ENCODE measurements at regions of chr19 and their contacts with region 1.

Region 1: GRCh38 chr19:55503502-55504251 is 15.4 kb downstream of the SSC5D start:
- DNase-seq: peak; percentile 92
- H3K4me3 Mint-ChIP-seq: peak overlapping the region; percentile 39
- H3K27ac Mint-ChIP-seq: no peak overlapping the region
- H3K4me1 Mint-ChIP-seq: no peaks in the 10 kb centered on the region
- H3K27me3 Mint-ChIP-seq: peaks cover 58% of the 10 kb centered on the region
- CTCF ChIP-seq: peak; percentile 98

Region 2: DNA sequence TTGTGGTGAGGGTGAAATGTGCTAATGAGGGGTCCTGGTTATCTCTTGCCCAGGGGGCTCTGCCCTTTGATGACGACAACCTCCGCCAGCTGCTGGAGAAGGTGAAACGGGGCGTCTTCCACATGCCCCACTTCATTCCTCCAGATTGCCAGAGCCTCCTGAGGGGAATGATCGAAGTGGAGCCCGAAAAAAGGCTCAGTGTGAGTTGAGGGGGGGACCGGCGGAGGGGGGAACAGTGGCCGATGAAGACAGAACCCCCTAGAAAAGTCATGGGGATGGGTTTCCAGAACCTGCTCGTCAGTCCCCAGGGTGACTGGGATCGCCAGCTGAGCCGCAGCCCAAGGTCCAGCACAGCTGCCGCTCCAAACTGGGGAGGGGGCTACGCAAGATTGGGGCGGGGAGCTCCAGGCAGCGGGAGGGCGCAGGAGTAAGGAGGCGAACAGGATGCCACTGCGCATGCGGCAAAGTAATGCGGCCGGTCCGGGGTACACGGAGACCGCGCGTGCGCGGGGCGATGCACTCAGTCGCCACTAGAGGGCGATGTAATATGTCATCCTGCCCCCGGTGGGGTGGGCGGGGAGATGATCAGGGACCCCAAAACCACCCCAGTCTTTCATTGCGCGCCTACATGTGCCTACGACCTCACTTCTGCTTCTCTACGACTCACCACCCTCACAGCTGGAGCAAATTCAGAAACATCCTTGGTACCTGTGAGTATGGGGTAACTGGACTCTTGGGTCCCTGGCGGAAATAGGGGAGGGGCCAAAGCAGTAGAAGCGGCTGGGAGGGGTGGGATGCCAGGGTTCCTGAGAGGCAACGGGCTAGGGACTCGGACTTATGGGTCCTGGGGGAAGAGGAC is 202.0 kb before region 1 on chr19:
- CTCF ChIA-PET with region 1: no interaction called
- intact Hi-C with region 1: loop called (anchors 10 kb)
- DNase-seq: peak; percentile 96
- H3K4me3 Mint-ChIP-seq: peak overlapping the region; percentile 75
- H3K27ac Mint-ChIP-seq: peak overlapping the region; percentile 42
- H3K4me1 Mint-ChIP-seq: peaks cover 10% of the 10 kb centered on the region
- H3K27me3 Mint-ChIP-seq: peaks cover 33% of the 10 kb centered on the region
- CTCF ChIP-seq: peak; percentile 99

Region 3: DNA sequence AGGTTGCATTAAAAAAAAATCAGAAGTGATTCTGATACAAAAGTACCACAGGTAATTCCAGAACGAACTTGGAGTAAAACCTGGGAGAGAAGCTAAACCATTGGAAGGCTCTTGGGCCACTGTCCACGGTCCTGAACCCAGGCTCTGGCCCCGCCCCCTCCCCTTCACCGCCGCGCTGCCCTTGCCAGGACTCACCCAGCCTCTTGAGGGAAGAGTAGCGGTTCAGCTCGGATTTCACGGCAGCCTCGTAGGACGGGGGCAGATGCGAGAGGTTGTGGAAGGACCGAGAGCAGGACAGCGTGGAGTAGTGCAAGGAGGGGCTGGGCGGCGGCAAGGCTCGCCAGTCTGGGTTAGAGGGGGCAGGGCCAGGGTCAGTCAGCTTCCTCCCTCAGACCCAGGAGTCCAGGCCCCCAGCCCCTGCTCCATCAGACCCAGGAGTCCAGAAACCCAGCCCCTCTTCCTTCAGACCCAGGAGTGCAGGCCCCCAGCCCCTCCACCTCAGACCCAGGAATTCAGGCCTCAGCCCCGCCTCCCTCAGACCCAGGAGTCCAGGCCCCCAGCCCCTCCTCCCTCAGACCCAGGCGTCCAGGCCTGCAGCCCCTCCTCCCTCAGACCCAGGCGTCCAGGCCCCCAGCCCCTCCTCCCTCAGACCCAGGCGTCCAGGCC is 66.1 kb before region 1 on chr19:
- CTCF ChIA-PET with region 1: no interaction called
- intact Hi-C with region 1: no loop called
- DNase-seq: peak; percentile 81
- H3K4me3 Mint-ChIP-seq: no peak overlapping the region
- H3K27ac Mint-ChIP-seq: no peak overlapping the region
- H3K4me1 Mint-ChIP-seq: peaks cover 13% of the 10 kb centered on the region
- H3K27me3 Mint-ChIP-seq: no peaks in the 10 kb centered on the region
- CTCF ChIP-seq: no peak

Region 4: GRCh38 chr19:55467236-55468053 is 36.2 kb before region 1 on chr19:
- CTCF ChIA-PET with region 1: interaction called, 25 read pairs
- intact Hi-C with region 1: loop called (anchors 1 kb)
- DNase-seq: peak; percentile 90
- H3K4me3 Mint-ChIP-seq: no peak overlapping the region
- H3K27ac Mint-ChIP-seq: no peak overlapping the region
- H3K4me1 Mint-ChIP-seq: peaks cover 33% of the 10 kb centered on the region
- H3K27me3 Mint-ChIP-seq: peaks cover 54% of the 10 kb centered on the region
- CTCF ChIP-seq: peak; percentile 99

Region 5: GRCh38 chr19:55476100-55476775 is 27.4 kb before region 1 on chr19 and contains the start of gene ZNF628:
- CTCF ChIA-PET with region 1: interaction called, 10 read pairs
- intact Hi-C with region 1: no loop called
- DNase-seq: peak; percentile 99
- H3K4me3 Mint-ChIP-seq: peak within 1 kb of the TSS; percentile 84
- H3K27ac Mint-ChIP-seq: peak within 1 kb of the TSS; percentile 92
- H3K4me1 Mint-ChIP-seq: peaks cover 30% of the 10 kb centered on the region
- H3K27me3 Mint-ChIP-seq: no peaks in the 10 kb centered on the region
- CTCF ChIP-seq: no peak
- total RNA-seq, gene ZNF628: 11.9 and 13.0 TPM in 2 replicates

Region 6: DNA sequence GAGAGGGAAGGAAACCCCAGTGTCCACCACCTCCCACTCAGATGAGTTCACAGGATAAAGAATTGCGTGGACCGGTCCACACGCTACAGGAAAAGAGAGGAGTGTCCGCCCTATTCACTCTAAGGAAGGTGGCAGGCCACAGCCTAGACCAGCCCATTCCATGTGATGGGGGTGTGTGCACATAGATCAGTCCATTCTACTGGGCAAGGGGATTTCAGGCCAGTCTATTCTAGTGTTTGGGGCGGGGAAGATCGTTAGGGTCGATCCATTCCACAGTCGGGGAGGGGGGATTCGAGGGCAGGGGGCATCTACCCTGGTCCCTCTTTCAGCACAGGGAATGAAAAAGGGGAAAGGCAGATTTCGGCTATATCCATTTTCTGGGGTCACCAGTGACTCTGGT is 87.9 kb after region 1 on chr19:
- CTCF ChIA-PET with region 1: no interaction called
- intact Hi-C with region 1: no loop called
- DNase-seq: no peak
- H3K4me3 Mint-ChIP-seq: no peak overlapping the region
- H3K27ac Mint-ChIP-seq: peak overlapping the region; percentile 59
- H3K4me1 Mint-ChIP-seq: peaks cover 1% of the 10 kb centered on the region
- H3K27me3 Mint-ChIP-seq: peaks cover 19% of the 10 kb centered on the region
- CTCF ChIP-seq: no peak

Region 7: DNA sequence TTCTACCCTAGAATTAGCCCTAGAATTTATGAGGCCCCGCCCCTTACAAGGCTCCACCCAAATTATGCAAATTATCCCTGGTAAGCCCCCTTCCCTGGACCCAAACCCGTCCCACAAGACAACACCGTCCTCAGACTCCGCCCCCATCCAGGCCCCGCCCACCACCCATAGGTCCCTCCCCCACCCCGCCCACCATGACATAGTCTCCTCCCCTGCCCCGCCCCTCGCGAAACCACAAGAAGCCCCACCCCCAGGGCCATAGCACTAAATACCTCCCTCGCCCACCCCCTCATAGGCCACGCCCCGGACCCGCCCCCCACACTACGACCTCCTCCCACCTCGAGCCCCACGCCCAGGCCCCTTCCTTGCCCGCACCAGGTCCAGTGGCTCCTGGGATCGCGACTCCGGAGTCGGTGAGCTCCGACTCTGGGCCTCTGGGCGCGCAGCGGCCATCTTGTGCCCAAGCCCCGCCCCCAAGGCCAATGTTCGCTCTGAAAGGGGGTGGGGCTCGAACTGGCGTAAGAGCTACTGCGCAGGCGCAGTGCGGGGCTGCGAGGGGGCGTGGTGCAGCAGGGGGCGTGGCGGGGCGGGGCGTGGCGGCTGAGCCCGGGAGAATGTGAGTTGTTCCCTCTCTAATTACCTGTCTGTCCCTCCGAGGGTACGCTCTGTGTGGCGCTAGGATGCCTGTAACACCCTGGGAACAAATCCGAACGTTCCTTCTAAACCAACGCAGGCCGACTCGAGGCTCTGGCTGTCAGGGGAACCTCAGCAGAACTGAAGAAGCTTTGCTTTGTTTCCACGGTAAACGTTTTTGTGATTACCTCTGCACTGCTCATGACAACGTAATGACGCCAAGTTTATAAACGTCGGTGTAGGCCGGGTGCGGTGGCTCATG is 120.7 kb after region 1 on chr19 and contains the start of gene ZNF784:
- CTCF ChIA-PET with region 1: interaction called, 16 read pairs
- intact Hi-C with region 1: no loop called
- DNase-seq: peak; percentile 97
- H3K4me3 Mint-ChIP-seq: peak within 1 kb of the TSS; percentile 92
- H3K27ac Mint-ChIP-seq: peak within 1 kb of the TSS; percentile 95
- H3K4me1 Mint-ChIP-seq: peaks cover 19% of the 10 kb centered on the region
- H3K27me3 Mint-ChIP-seq: no peaks in the 10 kb centered on the region
- CTCF ChIP-seq: no peak
- total RNA-seq, gene ZNF784: 6.0 and 7.1 TPM in 2 replicates